Activated CD4-positive, alpha-beta memory T cell treated with anti-CD3 and anti-CD28 coated beads for 36 hours (primary cell): ENCODE measurements at regions of chr2 and their contacts with region 1.

Region 1: GRCh38 chr2:157336137-157337010 is 10.8 kb upstream of the ERMN start:
- DNase-seq: peak; percentile 43
- H3K4me3 Mint-ChIP-seq: peak overlapping the region; percentile 52
- H3K27ac Mint-ChIP-seq: peak overlapping the region; percentile 40
- H3K4me1 Mint-ChIP-seq: peaks cover 55% of the 10 kb centered on the region
- H3K27me3 Mint-ChIP-seq: no peaks in the 10 kb centered on the region

Region 2: GRCh38 chr2:156526950-156527636 is 809.3 kb before region 1 on chr2:
- CTCF ChIA-PET with region 1: no interaction called
- POLR2A ChIA-PET with region 1: no interaction called
- intact Hi-C with region 1: no loop called
- DNase-seq: no peak
- H3K4me3 Mint-ChIP-seq: no peak overlapping the region
- H3K27ac Mint-ChIP-seq: no peak overlapping the region
- H3K4me1 Mint-ChIP-seq: peaks cover 9% of the 10 kb centered on the region
- H3K27me3 Mint-ChIP-seq: no peaks in the 10 kb centered on the region

Region 3: DNA sequence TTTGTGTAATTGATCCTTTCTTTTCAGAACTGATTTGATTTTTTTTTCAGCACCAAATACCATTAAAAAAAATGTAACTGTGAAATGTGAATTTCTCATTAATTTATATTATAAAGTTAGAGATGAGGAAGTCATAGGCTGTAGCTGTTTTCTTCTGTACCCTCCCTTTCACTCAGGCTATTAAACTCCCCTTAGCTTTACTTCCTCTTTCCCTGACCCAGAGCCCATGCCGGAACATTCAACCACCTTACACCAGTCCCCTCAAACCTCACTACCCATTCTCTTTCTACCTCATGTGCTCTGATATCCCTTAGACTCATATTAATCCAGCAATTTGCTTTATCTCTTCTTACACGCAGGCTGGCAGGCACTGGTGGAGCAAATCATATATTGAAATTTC is 66.5 kb before region 1 on chr2:
- CTCF ChIA-PET with region 1: no interaction called
- POLR2A ChIA-PET with region 1: no interaction called
- intact Hi-C with region 1: no loop called
- DNase-seq: no peak
- H3K4me3 Mint-ChIP-seq: no peak overlapping the region
- H3K27ac Mint-ChIP-seq: no peak overlapping the region
- H3K4me1 Mint-ChIP-seq: peaks cover 22% of the 10 kb centered on the region
- H3K27me3 Mint-ChIP-seq: peaks cover 2% of the 10 kb centered on the region

Region 4: DNA sequence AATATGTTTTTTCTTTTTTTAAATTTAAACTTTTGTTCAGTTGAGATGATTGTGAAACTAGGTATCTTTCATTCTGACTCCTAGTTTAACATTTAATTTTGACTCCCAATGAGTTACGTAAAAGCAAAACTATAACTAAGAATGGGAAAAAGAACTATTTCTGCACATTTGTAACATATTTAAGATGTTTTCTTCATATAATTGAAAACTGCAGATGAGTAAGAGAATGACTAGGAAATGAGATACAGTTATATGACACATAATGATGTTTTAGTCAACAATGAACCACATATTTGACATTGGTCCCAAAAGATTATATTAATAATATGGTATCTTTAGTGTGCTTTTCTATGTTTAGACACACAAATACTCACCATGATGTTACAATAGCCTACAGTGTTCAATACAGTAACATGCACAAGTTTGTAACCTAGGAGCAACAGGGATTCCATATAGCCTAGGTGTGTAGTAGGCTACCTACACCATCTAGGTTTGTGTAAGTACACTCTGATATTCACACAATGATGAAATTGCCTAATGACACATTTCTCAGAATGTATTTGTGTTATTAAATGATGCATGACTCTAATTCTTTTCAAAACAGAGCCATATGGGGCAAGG is 23.4 kb before region 1 on chr2:
- CTCF ChIA-PET with region 1: interaction called, 316 read pairs
- POLR2A ChIA-PET with region 1: no interaction called
- intact Hi-C with region 1: no loop called
- DNase-seq: no peak
- H3K4me3 Mint-ChIP-seq: no peak overlapping the region
- H3K27ac Mint-ChIP-seq: no peak overlapping the region
- H3K4me1 Mint-ChIP-seq: peaks cover 34% of the 10 kb centered on the region
- H3K27me3 Mint-ChIP-seq: peaks cover 2% of the 10 kb centered on the region

Region 5: DNA sequence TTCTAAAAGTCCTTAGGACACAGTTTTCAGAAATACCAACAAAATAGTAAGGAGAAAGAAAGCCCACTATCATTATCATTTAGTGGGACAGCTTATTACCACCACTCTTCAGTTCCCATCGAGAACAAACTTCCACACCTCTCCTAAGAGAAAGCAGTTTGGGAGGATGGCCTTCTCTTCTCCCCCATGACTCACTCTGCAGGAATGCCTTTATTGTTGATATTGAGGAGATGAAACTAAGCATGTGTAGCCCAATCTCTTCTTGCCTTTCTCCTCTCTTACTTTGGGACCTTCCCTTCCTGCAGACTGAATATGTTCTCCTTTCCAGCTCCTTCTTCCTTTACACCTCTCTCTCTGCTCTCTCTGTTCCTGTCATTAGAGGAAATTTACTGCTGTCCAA is 19.2 kb after region 1 on chr2:
- CTCF ChIA-PET with region 1: interaction called, 64 read pairs
- POLR2A ChIA-PET with region 1: no interaction called
- intact Hi-C with region 1: no loop called
- DNase-seq: no peak
- H3K4me3 Mint-ChIP-seq: no peak overlapping the region
- H3K27ac Mint-ChIP-seq: no peak overlapping the region
- H3K4me1 Mint-ChIP-seq: peaks cover 14% of the 10 kb centered on the region
- H3K27me3 Mint-ChIP-seq: no peaks in the 10 kb centered on the region

Region 6: DNA sequence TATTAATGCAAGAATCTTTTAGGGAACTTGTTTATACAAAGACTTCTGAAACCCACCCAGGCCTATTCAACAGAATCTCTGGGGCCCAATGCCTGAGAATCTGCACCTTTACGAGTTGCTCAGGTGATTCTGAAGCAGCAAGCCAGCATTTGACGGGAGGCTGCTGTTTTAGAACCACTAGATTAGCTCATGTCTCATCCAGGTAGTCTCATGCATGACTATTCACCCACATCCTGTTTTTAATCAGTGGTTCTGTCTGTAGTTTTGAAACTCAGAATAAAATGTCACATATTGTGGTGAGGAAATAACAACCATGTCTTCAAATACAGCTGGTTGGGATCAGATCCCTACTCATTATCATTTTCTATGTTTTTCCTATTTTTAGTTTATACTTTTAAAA is 68.0 kb after region 1 on chr2:
- CTCF ChIA-PET with region 1: interaction called, 39 read pairs
- POLR2A ChIA-PET with region 1: interaction called, 10 read pairs
- intact Hi-C with region 1: loop called (anchors 1 kb)
- DNase-seq: peak; percentile 73
- H3K4me3 Mint-ChIP-seq: no peak overlapping the region
- H3K27ac Mint-ChIP-seq: peak overlapping the region; percentile 78
- H3K4me1 Mint-ChIP-seq: peaks cover 68% of the 10 kb centered on the region
- H3K27me3 Mint-ChIP-seq: no peaks in the 10 kb centered on the region

Region 7: DNA sequence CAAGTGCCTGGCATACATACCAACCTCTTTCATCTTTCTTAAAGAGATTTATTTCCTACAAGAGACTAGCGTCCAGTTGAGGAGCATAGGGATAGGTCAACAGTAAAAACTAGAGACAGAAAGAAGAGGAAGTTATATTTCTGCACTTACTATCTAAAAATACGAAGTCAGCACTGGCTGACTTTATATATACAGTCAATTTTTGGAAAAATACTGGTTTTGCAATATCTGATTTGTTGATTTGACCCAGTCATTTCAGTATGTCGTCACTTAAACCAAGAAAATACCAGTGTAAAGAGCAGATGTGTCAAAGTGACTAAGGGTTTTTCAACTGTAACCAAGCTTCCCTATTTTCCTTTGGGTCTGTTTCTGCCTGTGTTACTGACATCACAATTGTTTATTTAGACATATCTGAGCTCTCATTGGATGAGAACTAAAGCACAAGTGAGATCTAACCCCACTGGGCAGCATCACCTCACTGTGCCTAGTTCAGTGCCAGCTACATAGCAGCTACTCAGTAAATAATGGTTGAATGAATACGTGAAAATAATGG is 84.5 kb after region 1 on chr2:
- CTCF ChIA-PET with region 1: interaction called, 39 read pairs
- POLR2A ChIA-PET with region 1: interaction called, 4 read pairs
- intact Hi-C with region 1: no loop called
- DNase-seq: peak; percentile 61
- H3K4me3 Mint-ChIP-seq: peak overlapping the region; percentile 38
- H3K27ac Mint-ChIP-seq: peak overlapping the region; percentile 97
- H3K4me1 Mint-ChIP-seq: peaks cover 74% of the 10 kb centered on the region
- H3K27me3 Mint-ChIP-seq: no peaks in the 10 kb centered on the region

Region 8: GRCh38 chr2:157468931-157469708 is 132.7 kb after region 1 on chr2:
- CTCF ChIA-PET with region 1: interaction called, 3 read pairs
- POLR2A ChIA-PET with region 1: no interaction called
- intact Hi-C with region 1: loop called (anchors 1 kb)
- DNase-seq: no peak
- H3K4me3 Mint-ChIP-seq: peak overlapping the region; percentile 69
- H3K27ac Mint-ChIP-seq: peak overlapping the region; percentile 99
- H3K4me1 Mint-ChIP-seq: peaks cover 91% of the 10 kb centered on the region
- H3K27me3 Mint-ChIP-seq: no peaks in the 10 kb centered on the region